ENCODE measurements at regions of chr6 and their contacts with region 1.

Region 1: GRCh38 chr6:6918216-6918983 is 189.4 kb upstream of the RREB1 start:
- DNase-seq: peak; percentile 91
- ATAC-seq: peak; percentile 97
- H3K4me3 Mint-ChIP-seq: no peak overlapping the region
- H3K27ac Mint-ChIP-seq: no peak overlapping the region
- H3K4me1 Mint-ChIP-seq: peaks cover 31% of the 10 kb centered on the region
- H3K27me3 Mint-ChIP-seq: peaks cover 32% of the 10 kb centered on the region

Region 2: DNA sequence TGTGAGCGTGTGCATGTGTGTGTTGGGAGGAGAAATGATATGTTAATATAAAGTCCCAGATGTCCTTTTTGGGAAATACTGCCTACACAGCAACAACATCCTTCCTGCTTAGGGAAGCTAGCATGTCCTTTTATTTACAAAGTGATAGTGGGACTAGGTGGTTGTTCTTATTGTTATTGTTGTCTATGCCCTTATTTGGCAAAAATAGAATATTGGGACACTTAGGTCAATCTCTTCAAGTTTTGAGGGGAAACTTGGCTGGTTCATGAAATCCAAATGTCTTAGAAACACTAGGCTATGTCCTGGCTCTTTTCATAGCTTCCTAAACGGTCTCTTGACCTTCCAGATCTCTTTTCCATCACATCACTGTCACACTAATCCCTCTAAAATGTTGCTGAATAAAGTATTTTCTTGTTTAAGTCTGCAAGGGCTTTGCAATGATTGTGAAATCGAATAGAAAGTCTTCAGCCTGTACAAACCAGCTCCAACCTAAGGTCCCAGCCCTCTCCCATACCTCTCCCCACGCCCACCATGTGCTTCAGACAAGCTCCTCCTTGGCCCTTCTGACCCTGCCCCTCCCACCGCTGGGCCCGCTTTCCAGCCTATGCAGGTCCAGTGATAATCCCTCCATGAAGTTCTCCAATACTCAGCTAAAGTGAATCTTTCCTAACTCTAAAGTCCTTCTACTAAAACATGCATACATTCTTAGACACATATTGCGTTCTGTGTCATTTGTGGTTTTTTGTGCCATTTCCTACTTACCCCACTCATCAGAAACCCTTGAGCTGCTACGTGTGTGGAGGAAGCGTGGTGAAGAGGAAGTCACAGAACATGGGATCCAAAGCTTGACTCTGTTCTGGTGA is 124.8 kb before region 1 on chr6:
- CTCF ChIA-PET with region 1: no interaction called
- POLR2A ChIA-PET with region 1: no interaction called
- intact Hi-C with region 1: loop called in 1 of 2 experiments (anchors 2 kb)
- DNase-seq: peak; percentile 18
- ATAC-seq: peak; percentile 25
- H3K4me3 Mint-ChIP-seq: no peak overlapping the region
- H3K27ac Mint-ChIP-seq: no peak overlapping the region
- H3K4me1 Mint-ChIP-seq: peaks cover 17% of the 10 kb centered on the region
- H3K27me3 Mint-ChIP-seq: peaks cover 4% of the 10 kb centered on the region

Region 3: GRCh38 chr6:7073821-7074525 is 155.6 kb after region 1 on chr6:
- CTCF ChIA-PET with region 1: no interaction called
- POLR2A ChIA-PET with region 1: no interaction called
- intact Hi-C with region 1: loop called in 1 of 2 experiments (anchors 1 kb)
- DNase-seq: peak; percentile 87
- ATAC-seq: peak; percentile 99
- H3K4me3 Mint-ChIP-seq: no peak overlapping the region
- H3K27ac Mint-ChIP-seq: no peak overlapping the region
- H3K4me1 Mint-ChIP-seq: peaks cover 12% of the 10 kb centered on the region
- H3K27me3 Mint-ChIP-seq: peaks cover 26% of the 10 kb centered on the region

Region 4: GRCh38 chr6:7140631-7141378 is 222.4 kb after region 1 on chr6:
- CTCF ChIA-PET with region 1: no interaction called
- POLR2A ChIA-PET with region 1: no interaction called
- intact Hi-C with region 1: loop called in 1 of 2 experiments (anchors 5 kb)
- DNase-seq: peak; percentile 91
- ATAC-seq: peak; percentile 72
- H3K4me3 Mint-ChIP-seq: peak overlapping the region; percentile 72
- H3K27ac Mint-ChIP-seq: peak overlapping the region; percentile 85
- H3K4me1 Mint-ChIP-seq: peaks cover 82% of the 10 kb centered on the region
- H3K27me3 Mint-ChIP-seq: no peaks in the 10 kb centered on the region

Region 5: GRCh38 chr6:7196019-7196402 is 277.6 kb after region 1 on chr6:
- CTCF ChIA-PET with region 1: no interaction called
- POLR2A ChIA-PET with region 1: no interaction called
- intact Hi-C with region 1: no loop called
- DNase-seq: peak; percentile 43
- ATAC-seq: peak; percentile 81
- H3K4me3 Mint-ChIP-seq: peak overlapping the region; percentile 24
- H3K27ac Mint-ChIP-seq: peak overlapping the region; percentile 64
- H3K4me1 Mint-ChIP-seq: peaks cover 31% of the 10 kb centered on the region
- H3K27me3 Mint-ChIP-seq: no peaks in the 10 kb centered on the region

Region 6: DNA sequence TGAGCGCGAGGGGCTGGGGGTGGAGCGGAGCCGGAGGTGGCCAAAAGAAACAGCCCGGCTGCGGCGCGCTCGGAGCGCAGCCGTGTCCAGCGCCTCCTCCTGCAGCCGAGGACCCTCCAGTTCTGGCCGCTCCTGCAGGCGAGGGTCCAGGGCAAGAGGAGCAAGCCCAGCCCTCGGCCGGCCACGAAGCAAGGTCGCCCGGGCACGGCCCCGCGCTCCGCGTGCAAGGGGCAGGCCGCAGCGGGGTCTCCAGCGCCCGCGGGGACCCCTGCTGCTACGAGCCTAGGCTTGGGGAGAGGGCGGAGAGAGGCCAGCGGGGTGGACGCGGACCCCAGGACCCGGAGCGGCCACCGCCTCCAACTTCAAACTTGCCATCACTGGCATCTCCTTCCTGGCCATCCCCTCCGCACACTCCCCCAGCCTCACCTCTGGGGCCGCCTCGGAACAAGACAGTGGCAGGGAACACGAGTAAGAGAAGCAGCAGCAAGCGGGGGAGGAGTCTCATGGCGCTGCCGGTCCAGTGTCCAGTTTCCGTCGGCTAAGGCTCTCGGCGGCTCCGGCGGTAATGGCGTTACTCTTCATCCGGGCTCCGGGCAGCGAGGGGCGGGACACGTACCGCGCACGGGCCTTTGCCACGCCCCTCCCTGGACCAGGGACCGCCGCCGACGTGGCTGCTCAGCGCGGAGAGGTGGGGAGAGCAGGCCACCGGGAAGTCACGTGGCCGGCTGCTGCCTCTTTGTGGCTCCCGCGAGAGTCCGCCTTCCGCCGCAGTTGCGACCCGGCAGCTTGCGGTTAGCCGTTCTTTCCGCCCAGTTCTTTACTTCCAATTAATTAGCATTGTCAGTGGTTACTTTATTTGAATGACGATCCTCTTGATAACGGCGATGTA is 394.5 kb after region 1 on chr6 and contains the start of gene SSR1:
- CTCF ChIA-PET with region 1: no interaction called
- POLR2A ChIA-PET with region 1: no interaction called
- intact Hi-C with region 1: loop called in 1 of 2 experiments (anchors 2 kb)
- DNase-seq: peak; percentile 97
- ATAC-seq: peak; percentile 97
- H3K4me3 Mint-ChIP-seq: peak within 1 kb of the TSS; percentile 99
- H3K27ac Mint-ChIP-seq: peak within 1 kb of the TSS; percentile 98
- H3K4me1 Mint-ChIP-seq: peaks cover 45% of the 10 kb centered on the region
- H3K27me3 Mint-ChIP-seq: no peaks in the 10 kb centered on the region
- total RNA-seq, gene SSR1: 129 to 165 TPM

Measured in activated CD4-positive, alpha-beta T cell treated with anti-CD3 and anti-CD28 coated beads for 36 hours (primary cell).